Heart right ventricle (tissue), 16 donors: ENCODE measurements at regions of chr17 and their contacts with region 1.

Region 1: DNA sequence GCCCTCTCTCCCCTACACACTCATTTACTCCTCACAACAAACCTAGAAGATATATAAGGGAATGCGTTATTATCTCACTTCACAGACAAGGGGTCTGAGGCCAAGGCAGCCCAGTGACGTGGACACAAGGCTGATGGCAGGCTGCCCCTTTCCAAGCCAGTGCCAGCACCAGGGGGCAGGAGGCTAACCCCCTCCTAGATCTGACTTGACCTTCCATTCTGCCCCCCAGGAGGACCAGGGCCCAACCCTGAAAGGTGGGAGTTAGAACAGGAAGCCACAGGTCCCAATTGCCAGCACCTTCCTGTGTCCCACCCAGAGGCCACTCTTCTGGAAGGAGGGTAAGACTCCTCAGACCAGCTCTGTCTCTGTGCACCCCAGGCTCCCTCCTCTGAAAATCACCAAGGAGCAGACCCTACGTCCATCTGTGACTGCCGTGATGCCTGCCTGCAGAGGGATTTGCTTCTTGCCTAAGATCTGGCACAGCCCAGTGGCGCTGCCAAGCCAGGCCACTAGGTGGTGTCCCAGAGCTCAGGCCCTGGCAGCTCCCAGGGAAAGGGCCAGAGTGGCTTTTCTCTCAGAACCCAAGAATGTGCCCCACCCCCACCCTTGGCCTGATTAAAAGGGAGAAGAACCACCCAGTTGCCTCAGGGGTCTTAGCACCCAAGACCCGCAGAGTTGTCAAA is 42.4 kb upstream of the MRPS23 start:
- DNase-seq: peak; percentile 87 to 90
- ATAC-seq: peak; percentile 36 to 79 (median 58)
- H3K4me3 ChIP-seq: peak overlapping the region in 5 of 10 donors; percentile 42 to 53 (median 52)
- H3K27ac ChIP-seq: peak overlapping the region; percentile 91 to 99 (median 94)
- H3K4me1 ChIP-seq: peaks cover 42 to 91% (median 76%) of the 10 kb centered on the region in 9 donors
- H3K27me3 ChIP-seq: no peaks in the 10 kb centered on the region
- CTCF ChIP-seq: peak; percentile 95 to 99 (median 98)

Region 2: GRCh38 chr17:57849874-57850754 is 42.2 kb before region 1 on chr17 and contains the start of gene MRPS23:
- intact Hi-C with region 1: loop called in 5 of 10 experiments (anchors 2 to 5 kb)
- DNase-seq: peak; percentile 97 to 98
- ATAC-seq: peak; percentile 85 to 94 (median 90)
- H3K4me3 ChIP-seq: peak within 1 kb of the TSS; percentile 53 to 94 (median 87)
- H3K27ac ChIP-seq: peak within 1 kb of the TSS; percentile 86 to 98 (median 90)
- H3K4me1 ChIP-seq: peaks cover 13 to 66% (median 47%) of the 10 kb centered on the region in 9 donors
- H3K27me3 ChIP-seq: no peaks in the 10 kb centered on the region
- CTCF ChIP-seq: peak in 1 of 9 donors; percentile 6
- total RNA-seq, gene MRPS23: 61.2 to 103 (median 75.5) TPM

Region 3: GRCh38 chr17:57855391-57856035 is 36.8 kb before region 1 on chr17:
- intact Hi-C with region 1: loop called in 5 of 10 experiments (anchors 2 to 5 kb)
- DNase-seq: no peak
- ATAC-seq: no peak
- H3K4me3 ChIP-seq: no peak overlapping the region
- H3K27ac ChIP-seq: peak overlapping the region in 5 of 10 donors; percentile 12 to 91 (median 47)
- H3K4me1 ChIP-seq: peaks cover 10 to 74% (median 33%) of the 10 kb centered on the region in 9 donors
- H3K27me3 ChIP-seq: no peaks in the 10 kb centered on the region
- CTCF ChIP-seq: no peak

Region 4: DNA sequence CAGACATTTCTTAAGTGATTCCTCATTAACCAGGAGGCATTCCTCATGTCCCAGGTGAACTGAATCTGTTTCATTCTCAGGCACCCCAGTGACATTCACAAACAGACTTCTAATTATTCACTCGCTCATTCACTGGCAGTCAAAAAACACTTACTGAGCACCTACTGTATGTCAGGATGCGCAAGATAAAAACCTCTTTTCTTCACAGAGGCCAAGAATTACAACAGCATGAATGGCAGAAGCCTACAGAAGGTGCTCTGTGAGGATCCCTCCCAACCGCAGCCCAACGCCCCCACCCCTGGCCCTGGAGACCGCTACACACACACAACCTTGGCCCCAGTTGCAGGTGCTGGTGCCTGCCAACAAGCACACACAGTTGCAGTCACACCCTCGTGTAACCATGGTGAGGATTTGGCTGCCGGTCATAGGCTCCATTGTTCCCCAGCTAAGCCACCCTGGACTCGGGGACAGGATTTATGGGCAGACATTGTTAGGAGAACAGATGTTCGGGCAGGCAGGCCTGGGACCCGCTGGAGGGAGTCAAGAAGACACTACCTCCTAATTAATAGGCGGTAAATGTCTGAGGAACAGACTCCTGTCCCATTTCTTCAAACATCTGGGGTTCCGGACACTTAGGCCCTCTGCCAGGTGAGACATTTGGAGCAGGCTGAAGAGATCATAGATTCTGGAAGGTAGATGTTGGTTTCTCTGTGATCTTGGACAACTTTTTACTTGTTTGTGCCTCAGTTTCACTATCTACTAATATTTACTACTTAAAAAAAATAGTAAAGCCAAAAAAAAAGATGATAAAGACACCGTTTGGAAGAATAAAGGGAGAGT is 19.8 kb after region 1 on chr17:
- intact Hi-C with region 1: loop called in 1 of 10 experiments (anchors 1 kb)
- DNase-seq: peak; percentile 92 to 96
- ATAC-seq: peak; percentile 86 to 97 (median 93)
- H3K4me3 ChIP-seq: peak overlapping the region in 2 of 10 donors; percentile 16 to 24
- H3K27ac ChIP-seq: peak overlapping the region; percentile 4 to 85 (median 72)
- H3K4me1 ChIP-seq: peaks cover 41 to 79% (median 62%) of the 10 kb centered on the region in 9 donors
- H3K27me3 ChIP-seq: no peaks in the 10 kb centered on the region
- CTCF ChIP-seq: no peak

Region 5: GRCh38 chr17:57955183-57955931 is 63.1 kb after region 1 on chr17 and contains the start of gene CUEDC1:
- intact Hi-C with region 1: loop called in 8 of 10 experiments (anchors 2 to 10 kb)
- DNase-seq: peak; percentile 81 to 90
- ATAC-seq: peak; percentile 53 to 80 (median 62)
- H3K4me3 ChIP-seq: peak within 1 kb of the TSS; percentile 74 to 98 (median 84)
- H3K27ac ChIP-seq: peak within 1 kb of the TSS; percentile 97 to 100 (median 99)
- H3K4me1 ChIP-seq: peaks cover 14 to 56% (median 52%) of the 10 kb centered on the region in 9 donors
- H3K27me3 ChIP-seq: peaks cover 0 to 4% (median 0%) of the 10 kb centered on the region in 7 donors
- CTCF ChIP-seq: peak in 8 of 9 donors; percentile 4 to 61 (median 42)
- total RNA-seq, gene CUEDC1: 38.3 to 65.0 (median 47.2) TPM

Region 6: GRCh38 chr17:57987580-57988421 is 95.5 kb after region 1 on chr17 and contains the start of gene VEZF1:
- intact Hi-C with region 1: loop called in 7 of 10 experiments (anchors 2 to 5 kb)
- DNase-seq: peak; percentile 79 to 85
- ATAC-seq: peak; percentile 67 to 82 (median 75)
- H3K4me3 ChIP-seq: peak within 1 kb of the TSS; percentile 65 to 94 (median 83)
- H3K27ac ChIP-seq: peak within 1 kb of the TSS; percentile 95 to 99 (median 98)
- H3K4me1 ChIP-seq: peaks cover 11 to 80% (median 62%) of the 10 kb centered on the region in 9 donors
- H3K27me3 ChIP-seq: no peaks in the 10 kb centered on the region
- CTCF ChIP-seq: no peak
- total RNA-seq, gene VEZF1: 56.2 to 81.2 (median 61.5) TPM

Region 7: DNA sequence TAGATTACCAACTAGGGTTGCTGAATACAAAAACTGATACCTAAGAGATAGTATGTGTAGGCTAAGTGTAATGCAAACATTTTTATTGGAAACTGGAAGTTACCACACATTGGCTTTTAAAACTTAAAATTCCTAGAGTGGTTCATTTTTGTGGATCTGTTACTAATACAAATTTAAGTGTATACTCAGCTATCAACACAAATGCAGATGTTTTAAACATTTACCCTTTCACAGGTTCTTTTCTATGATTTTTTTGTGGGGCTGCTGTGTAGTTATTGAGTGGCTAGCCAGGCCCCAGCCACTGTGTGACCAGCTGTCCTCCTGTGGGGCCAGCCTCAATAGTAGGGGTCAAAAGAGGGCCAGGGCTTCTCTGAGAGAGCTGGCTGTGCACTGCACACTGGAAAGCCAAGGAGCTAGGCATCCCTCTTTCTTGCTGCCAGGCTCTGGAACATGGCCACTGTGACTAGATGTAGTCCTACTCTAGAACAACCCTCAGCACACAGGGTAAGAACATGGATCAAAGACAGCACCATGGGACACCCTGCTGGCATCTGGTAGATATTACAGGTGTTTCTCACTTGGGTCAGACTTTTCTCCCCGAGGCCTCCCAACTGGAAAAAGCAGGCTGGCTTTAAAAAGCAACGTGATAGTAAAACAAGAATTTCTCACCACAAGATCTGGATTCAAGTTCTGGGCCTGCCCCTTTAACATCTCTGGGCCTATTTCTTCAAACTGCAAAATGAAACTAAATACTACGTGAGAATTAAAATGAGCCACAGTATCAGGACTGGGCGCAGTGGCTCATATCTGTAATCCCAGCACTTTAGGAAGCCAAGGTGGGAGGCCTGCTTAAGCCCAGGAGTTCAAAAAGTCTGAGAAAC is 103.0 kb after region 1 on chr17:
- intact Hi-C with region 1: loop called in 1 of 10 experiments (anchors 2 kb)
- DNase-seq: peak; percentile 29 to 76
- ATAC-seq: peak; percentile 88 to 92 (median 90)
- H3K4me3 ChIP-seq: no peak overlapping the region
- H3K27ac ChIP-seq: peak overlapping the region in 8 of 10 donors; percentile 14 to 59 (median 35)
- H3K4me1 ChIP-seq: peaks cover 3 to 64% (median 36%) of the 10 kb centered on the region in 9 donors
- H3K27me3 ChIP-seq: no peaks in the 10 kb centered on the region
- CTCF ChIP-seq: peak; percentile 37 to 75 (median 70)